ENCODE measurements at regions of chr22 and their contacts with region 1.

Region 1: DNA sequence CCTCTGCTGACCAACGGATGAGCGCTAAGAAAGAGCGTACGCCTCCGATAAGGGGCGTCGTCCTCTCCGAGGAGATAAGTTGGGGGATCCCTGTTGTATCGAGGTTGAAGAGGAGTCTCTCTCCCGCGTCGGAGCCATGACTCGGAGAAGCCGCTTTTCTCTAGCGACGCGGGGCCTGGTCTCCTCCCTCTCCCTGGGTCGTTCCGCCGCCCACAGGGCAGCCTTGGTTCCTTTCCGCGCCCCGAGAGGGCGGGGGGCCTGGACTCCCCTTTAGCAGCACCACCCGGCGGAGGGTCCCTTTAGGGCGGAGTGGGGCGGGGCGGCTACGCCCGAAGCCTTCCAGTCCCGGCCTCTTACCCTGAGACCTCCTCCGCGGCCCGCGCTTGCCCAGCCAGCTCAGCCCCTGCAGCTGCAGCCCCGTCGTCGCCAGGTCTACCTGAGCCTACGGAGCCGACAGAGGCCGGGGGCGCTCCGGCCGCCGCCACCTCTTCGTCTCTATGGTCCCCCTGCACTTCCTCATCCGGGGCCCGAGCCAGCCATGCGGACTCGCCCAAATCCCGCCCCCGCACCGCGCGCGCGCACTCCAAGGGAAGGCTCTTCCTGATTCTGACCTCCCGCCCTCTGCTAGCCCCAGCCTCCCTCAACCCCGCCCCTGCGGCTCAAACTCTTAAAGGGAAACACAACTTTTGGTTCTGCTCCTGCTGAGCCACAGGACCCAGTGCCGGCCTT is at the start of gene PRR14L:
- DNase-seq: peak; percentile 93 to 99 (median 98)
- ATAC-seq: peak; percentile 72
- H3K4me3 ChIP-seq: peak within 1 kb of the TSS; percentile 77
- H3K4me3 Mint-ChIP-seq: peak within 1 kb of the TSS; percentile 98
- H3K27ac ChIP-seq: peak within 1 kb of the TSS; percentile 72 to 85
- H3K27ac Mint-ChIP-seq: peak within 1 kb of the TSS; percentile 97
- H3K4me1 ChIP-seq: peaks cover 45% of the 10 kb centered on the region
- H3K4me1 Mint-ChIP-seq: peaks cover 64% of the 10 kb centered on the region
- H3K27me3 ChIP-seq: no peaks in the 10 kb centered on the region
- H3K27me3 Mint-ChIP-seq: no peaks in the 10 kb centered on the region
- CTCF ChIP-seq: no peak
- total RNA-seq, gene PRR14L: 23.4 to 24.9 TPM

Region 2: DNA sequence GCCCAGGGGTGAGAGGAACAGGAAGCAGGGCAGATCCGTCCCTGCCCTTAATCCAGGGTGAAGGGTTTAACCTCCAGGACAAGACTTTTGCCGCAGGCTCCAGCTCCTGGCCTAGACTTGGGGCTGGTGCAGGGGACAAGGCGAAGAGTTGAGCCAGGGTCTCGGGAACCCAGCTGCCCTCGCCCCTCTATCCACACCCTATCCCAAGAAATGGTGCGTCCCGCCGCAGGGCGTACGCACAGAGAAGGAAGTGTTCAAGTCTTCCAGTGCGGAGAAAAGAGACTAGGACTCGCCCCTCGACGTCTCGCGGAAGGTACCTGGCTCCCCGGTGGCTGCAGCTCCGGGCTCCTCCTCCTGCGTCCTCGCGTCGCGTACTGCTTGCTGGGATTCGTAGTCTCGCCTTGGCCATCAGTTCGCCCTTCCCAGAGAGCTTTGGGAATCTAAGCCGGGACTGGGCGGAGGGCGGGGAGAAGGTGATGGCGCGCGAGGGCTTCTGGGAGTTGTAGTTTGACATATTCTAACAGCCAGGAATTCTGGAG is 1983.1 kb before region 1 on chr22 and contains the start of gene ZMAT5:
- CTCF ChIA-PET with region 1: no interaction called
- POLR2A ChIA-PET with region 1: no interaction called
- intact Hi-C with region 1: loop called in 1 of 2 experiments (anchors 5 kb)
- DNase-seq: peak; percentile 81 to 97 (median 88)
- ATAC-seq: peak; percentile 96
- H3K4me3 ChIP-seq: peak within 1 kb of the TSS; percentile 83
- H3K4me3 Mint-ChIP-seq: peak within 1 kb of the TSS; percentile 98
- H3K27ac ChIP-seq: peak within 1 kb of the TSS; percentile 73 to 78
- H3K27ac Mint-ChIP-seq: peak within 1 kb of the TSS; percentile 88
- H3K4me1 ChIP-seq: peaks cover 30% of the 10 kb centered on the region
- H3K4me1 Mint-ChIP-seq: peaks cover 34% of the 10 kb centered on the region
- H3K27me3 ChIP-seq: no peaks in the 10 kb centered on the region
- H3K27me3 Mint-ChIP-seq: no peaks in the 10 kb centered on the region
- CTCF ChIP-seq: no peak
- total RNA-seq, gene ZMAT5: 5.6 to 6.6 TPM

Region 3: DNA sequence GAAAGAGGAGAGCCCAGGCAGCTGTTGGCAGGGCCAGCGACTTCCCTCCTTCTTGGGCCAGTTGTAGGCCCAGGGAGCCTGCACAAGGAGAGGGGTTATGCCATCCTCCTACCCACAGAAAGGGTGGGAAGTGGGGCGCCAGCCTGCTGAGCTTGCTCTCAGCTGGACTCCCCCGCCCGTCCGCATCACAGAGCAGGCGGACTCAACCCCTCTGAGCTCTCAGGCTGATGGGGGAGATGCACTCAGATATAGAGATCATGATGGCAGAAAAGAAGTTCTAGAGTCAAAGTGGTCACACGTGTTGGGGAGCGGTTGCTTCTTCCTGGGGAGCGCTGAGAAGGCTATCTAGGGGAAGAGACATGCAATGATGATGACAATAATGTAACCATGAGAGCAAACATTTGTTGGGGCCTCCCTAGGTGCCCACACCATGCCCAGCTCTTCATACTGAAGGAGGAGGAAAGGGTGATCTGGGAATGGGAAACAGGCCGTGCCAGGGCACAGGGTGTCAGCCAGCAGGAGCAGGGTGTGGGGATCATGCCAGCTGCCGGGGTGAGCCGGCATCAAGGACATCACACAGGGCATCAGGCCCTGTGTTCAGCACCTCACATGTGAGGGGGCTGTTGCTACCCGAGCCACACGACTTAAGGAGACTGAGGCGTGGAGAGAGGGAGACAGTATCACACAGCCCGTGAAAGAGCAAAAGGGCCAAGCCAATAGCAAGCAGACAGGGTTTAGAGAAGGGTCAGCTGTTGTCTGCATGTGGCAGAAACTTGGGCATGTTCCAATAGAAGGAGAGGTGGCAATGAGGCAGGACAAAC is 1106.5 kb before region 1 on chr22:
- CTCF ChIA-PET with region 1: no interaction called
- POLR2A ChIA-PET with region 1: no interaction called
- intact Hi-C with region 1: no loop called
- DNase-seq: no peak
- ATAC-seq: no peak
- H3K4me3 ChIP-seq: no peak overlapping the region
- H3K4me3 Mint-ChIP-seq: no peak overlapping the region
- H3K27ac ChIP-seq: no peak overlapping the region
- H3K27ac Mint-ChIP-seq: no peak overlapping the region
- H3K4me1 ChIP-seq: no peaks in the 10 kb centered on the region
- H3K4me1 Mint-ChIP-seq: no peaks in the 10 kb centered on the region
- H3K27me3 ChIP-seq: no peaks in the 10 kb centered on the region
- H3K27me3 Mint-ChIP-seq: no peaks in the 10 kb centered on the region
- CTCF ChIP-seq: no peak

Region 4: GRCh38 chr22:31345331-31346254 is 404.2 kb before region 1 on chr22:
- CTCF ChIA-PET with region 1: no interaction called
- POLR2A ChIA-PET with region 1: interaction called, 3 read pairs
- intact Hi-C with region 1: loop called in 1 of 2 experiments (anchors 2 kb)
- DNase-seq: peak; percentile 84 to 97 (median 90)
- ATAC-seq: peak; percentile 69
- H3K4me3 ChIP-seq: peak overlapping the region; percentile 88
- H3K4me3 Mint-ChIP-seq: peak overlapping the region; percentile 97
- H3K27ac ChIP-seq: peak overlapping the region in 1 of 2 donors; percentile 69
- H3K27ac Mint-ChIP-seq: peak overlapping the region; percentile 95
- H3K4me1 ChIP-seq: peaks cover 65% of the 10 kb centered on the region
- H3K4me1 Mint-ChIP-seq: peaks cover 54% of the 10 kb centered on the region
- H3K27me3 ChIP-seq: no peaks in the 10 kb centered on the region
- H3K27me3 Mint-ChIP-seq: no peaks in the 10 kb centered on the region
- CTCF ChIP-seq: peak; percentile 73

Region 5: GRCh38 chr22:31496007-31496734 is 253.6 kb before region 1 on chr22 and contains the start of gene SFI1:
- CTCF ChIA-PET with region 1: no interaction called
- POLR2A ChIA-PET with region 1: no interaction called
- intact Hi-C with region 1: loop called in 1 of 2 experiments (anchors 5 kb)
- DNase-seq: peak; percentile 93 to 98 (median 96)
- ATAC-seq: peak; percentile 78
- H3K4me3 ChIP-seq: peak within 1 kb of the TSS; percentile 100
- H3K4me3 Mint-ChIP-seq: peak within 1 kb of the TSS; percentile 82
- H3K27ac ChIP-seq: peak within 1 kb of the TSS; percentile 94 to 97
- H3K27ac Mint-ChIP-seq: peak within 1 kb of the TSS; percentile 97
- H3K4me1 ChIP-seq: peaks cover 64% of the 10 kb centered on the region
- H3K4me1 Mint-ChIP-seq: peaks cover 57% of the 10 kb centered on the region
- H3K27me3 ChIP-seq: no peaks in the 10 kb centered on the region
- H3K27me3 Mint-ChIP-seq: no peaks in the 10 kb centered on the region
- CTCF ChIP-seq: peak; percentile 37
- total RNA-seq, gene SFI1: 281 to 291 TPM

Region 6: DNA sequence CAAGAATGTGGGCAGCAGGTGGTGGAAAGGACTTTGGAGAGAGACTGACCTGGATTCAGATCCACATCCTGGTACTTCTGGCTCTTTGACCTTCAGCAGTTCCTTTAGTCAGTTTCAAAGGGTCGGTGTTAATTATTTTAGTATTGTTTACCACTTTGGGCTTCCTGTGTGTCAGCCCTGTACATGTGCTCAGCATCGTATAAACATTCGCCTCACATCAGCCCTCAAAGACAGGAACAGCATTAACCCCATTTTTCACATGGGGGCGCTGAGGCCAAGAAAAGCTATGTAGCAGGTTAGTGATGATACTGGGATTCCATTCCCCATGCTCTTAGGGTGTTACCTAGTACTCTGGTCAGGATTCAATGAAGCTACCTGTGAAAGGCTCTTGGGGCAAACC is 122.4 kb after region 1 on chr22:
- CTCF ChIA-PET with region 1: no interaction called
- POLR2A ChIA-PET with region 1: no interaction called
- intact Hi-C with region 1: no loop called
- DNase-seq: peak in 7 of 14 experiments; percentile 1 to 40 (median 23)
- ATAC-seq: no peak
- H3K4me3 ChIP-seq: no peak overlapping the region
- H3K4me3 Mint-ChIP-seq: no peak overlapping the region
- H3K27ac ChIP-seq: no peak overlapping the region
- H3K27ac Mint-ChIP-seq: no peak overlapping the region
- H3K4me1 ChIP-seq: no peaks in the 10 kb centered on the region
- H3K4me1 Mint-ChIP-seq: no peaks in the 10 kb centered on the region
- H3K27me3 ChIP-seq: no peaks in the 10 kb centered on the region
- H3K27me3 Mint-ChIP-seq: no peaks in the 10 kb centered on the region
- CTCF ChIP-seq: no peak

Region 7: DNA sequence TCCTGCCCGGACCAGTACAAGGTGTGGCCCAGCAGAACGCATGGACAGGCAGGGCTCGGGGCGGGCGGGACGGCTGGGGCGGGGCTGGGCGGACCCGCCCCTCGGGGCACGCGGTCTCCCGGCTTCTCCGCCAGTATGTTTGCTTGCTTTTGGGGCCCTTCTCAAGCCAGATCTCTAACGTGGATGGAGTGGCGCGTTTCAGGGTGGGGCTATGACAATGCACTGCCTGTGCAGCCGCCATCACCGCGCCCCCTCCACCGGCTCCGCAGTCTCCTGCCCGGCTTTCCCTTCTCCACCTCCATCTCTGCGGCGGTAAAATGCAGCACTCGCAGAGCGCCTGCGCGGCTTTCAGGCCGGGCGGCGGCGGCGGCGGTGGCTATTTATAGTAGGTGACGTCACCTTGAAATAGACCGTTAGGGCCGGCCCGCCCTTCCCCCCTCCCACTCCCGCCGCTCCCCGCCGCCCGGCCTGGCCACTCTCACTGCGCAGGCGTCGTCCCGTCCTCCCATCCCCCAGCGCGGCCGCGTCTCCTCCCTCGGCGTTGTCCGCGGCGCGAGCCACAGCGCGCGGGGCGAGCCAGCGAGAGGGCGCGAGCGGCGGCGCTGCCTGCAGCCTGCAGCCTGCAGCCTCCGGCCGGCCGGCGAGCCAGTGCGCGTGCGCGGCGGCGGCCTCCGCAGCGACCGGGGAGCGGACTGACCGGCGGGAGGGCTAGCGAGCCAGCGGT is 194.3 kb after region 1 on chr22 and contains the start of gene YWHAH:
- CTCF ChIA-PET with region 1: no interaction called
- POLR2A ChIA-PET with region 1: interaction called, 6 read pairs
- intact Hi-C with region 1: loop called in 1 of 2 experiments (anchors 1 kb)
- DNase-seq: peak; percentile 72 to 93 (median 81)
- ATAC-seq: peak; percentile 65
- H3K4me3 ChIP-seq: peak within 1 kb of the TSS; percentile 73
- H3K4me3 Mint-ChIP-seq: peak within 1 kb of the TSS; percentile 94
- H3K27ac ChIP-seq: peak within 1 kb of the TSS; percentile 77 to 84
- H3K27ac Mint-ChIP-seq: no peak within 1 kb of the TSS
- H3K4me1 ChIP-seq: peaks cover 27% of the 10 kb centered on the region
- H3K4me1 Mint-ChIP-seq: peaks cover 19% of the 10 kb centered on the region
- H3K27me3 ChIP-seq: no peaks in the 10 kb centered on the region
- H3K27me3 Mint-ChIP-seq: no peaks in the 10 kb centered on the region
- CTCF ChIP-seq: no peak
- total RNA-seq, gene YWHAH: 24.4 to 26.1 TPM

Region 8: DNA sequence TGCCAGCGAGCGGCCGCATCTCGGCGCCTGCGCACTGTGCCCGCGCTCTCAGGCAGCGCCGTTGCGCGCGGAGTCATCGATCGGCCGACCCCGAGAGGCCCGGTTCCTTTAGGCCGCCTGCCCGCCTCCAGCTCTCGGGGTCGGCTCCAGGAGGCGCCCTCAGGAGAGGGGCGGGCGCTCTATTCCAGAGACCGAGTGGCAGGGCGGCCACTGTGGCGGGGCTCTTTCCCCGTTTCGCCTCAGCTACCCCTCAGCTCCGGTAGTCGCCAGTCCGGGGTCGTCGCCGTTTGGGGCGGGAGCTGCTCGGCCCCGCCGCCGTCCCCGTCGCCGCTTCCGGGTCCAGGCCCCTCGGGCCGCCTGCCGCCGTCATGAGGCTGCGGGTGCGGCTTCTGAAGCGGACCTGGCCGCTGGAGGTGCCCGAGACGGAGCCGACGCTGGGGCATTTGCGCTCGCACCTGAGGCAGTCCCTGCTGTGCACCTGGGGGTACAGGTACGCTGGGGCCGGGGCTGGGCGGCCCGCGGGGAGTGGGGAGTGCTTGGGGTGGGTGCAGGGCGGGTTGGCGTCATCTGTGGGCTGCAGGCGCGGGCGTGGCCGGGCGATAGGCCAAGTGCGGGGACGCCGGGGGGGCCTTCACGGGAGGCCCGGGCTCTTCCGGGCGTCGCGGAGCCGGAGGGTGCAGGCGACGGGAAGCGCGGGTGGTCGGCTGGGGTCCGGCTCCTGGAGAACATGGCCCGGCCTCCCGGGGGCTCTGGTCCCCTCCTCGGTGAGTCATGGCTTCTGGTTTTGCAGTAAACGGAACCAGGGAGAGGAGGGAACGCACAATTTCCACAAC is 725.1 kb after region 1 on chr22 and contains the start of gene FBXO7:
- CTCF ChIA-PET with region 1: no interaction called
- POLR2A ChIA-PET with region 1: interaction called, 3 read pairs
- intact Hi-C with region 1: loop called (anchors 5 kb)
- DNase-seq: peak; percentile 68 to 94 (median 82)
- ATAC-seq: peak; percentile 82
- H3K4me3 ChIP-seq: peak within 1 kb of the TSS; percentile 91
- H3K4me3 Mint-ChIP-seq: peak within 1 kb of the TSS; percentile 95
- H3K27ac ChIP-seq: peak within 1 kb of the TSS; percentile 84 to 95
- H3K27ac Mint-ChIP-seq: no peak within 1 kb of the TSS
- H3K4me1 ChIP-seq: peaks cover 20% of the 10 kb centered on the region
- H3K4me1 Mint-ChIP-seq: peaks cover 26% of the 10 kb centered on the region
- H3K27me3 ChIP-seq: no peaks in the 10 kb centered on the region
- H3K27me3 Mint-ChIP-seq: no peaks in the 10 kb centered on the region
- CTCF ChIP-seq: peak; percentile 23
- total RNA-seq, gene FBXO7: 161 to 169 TPM

Measured in CD4-positive, alpha-beta T cell (primary cell).